Naive thymus-derived CD4-positive, alpha-beta T cell (primary cell): ENCODE measurements at regions of chr5 and their contacts with region 1.

Region 1: GRCh38 chr5:150458819-150459557 is 9.4 kb upstream of the RPS14 start:
- DNase-seq: peak; percentile 72 to 92 (median 85)
- ATAC-seq: peak; percentile 99
- H3K4me3 ChIP-seq: no peak overlapping the region
- H3K4me3 Mint-ChIP-seq: peak overlapping the region in 9 of 10 donors; percentile 4 to 70 (median 60)
- H3K27ac ChIP-seq: peak overlapping the region; percentile 23
- H3K27ac Mint-ChIP-seq: peak overlapping the region; percentile 40 to 91 (median 77)
- H3K4me1 ChIP-seq: peaks cover 0 to 30% of the 10 kb centered on the region in 2 donors
- H3K4me1 Mint-ChIP-seq: peaks cover 17 to 50% (median 42%) of the 10 kb centered on the region in 7 donors
- H3K27me3 ChIP-seq: no peaks in the 10 kb centered on the region
- H3K27me3 Mint-ChIP-seq: no peaks in the 10 kb centered on the region

Region 2: DNA sequence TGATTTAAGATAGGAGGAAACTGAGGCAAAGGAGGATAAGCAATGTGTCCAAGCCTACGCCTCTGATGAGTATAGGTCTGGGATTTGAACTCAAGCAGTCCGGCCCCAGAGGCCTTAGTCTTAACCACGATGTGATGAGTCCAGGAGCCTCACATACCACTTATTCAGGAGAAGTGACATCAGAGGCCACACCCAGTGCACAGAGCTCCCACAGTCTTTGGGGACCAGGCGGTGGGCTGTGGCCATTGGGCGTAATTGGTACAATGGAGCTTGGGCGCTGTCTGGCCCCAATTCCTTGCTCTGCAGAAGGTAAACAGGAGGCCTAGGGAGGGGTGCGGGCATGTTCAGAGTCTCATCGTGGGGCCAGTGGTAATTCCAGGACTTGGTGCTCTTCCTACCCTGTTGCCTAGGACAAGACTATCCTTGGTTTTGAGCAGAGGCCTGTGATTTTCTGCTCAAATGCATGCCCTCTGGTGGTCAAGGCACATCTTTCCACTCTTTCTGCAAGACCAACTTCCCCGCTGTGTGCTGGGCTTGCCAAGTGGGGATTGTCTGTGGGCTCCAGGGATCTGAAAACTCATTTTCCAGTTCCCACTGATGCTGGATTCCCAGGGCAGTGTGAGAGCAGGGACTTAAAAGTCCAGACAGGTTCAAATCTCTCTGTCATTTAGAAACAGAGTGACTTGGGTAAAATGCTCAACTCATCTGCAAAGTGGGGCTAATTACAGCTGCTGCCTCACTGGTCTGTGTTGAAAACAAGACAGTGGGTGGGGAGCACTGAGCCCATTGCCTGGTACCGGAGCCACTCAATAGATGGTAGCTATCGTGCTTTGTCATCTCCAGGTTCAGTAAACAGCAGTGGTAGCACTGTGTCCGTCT is 64.7 kb after region 1 on chr5:
- CTCF ChIA-PET with region 1: interaction called, 9 read pairs
- POLR2A ChIA-PET with region 1: no interaction called
- intact Hi-C with region 1: loop called (anchors 1 kb)
- DNase-seq: peak in 6 of 9 donors; percentile 10 to 39 (median 30)
- ATAC-seq: peak; percentile 57
- H3K4me3 ChIP-seq: no peak overlapping the region
- H3K4me3 Mint-ChIP-seq: no peak overlapping the region
- H3K27ac ChIP-seq: no peak overlapping the region
- H3K27ac Mint-ChIP-seq: no peak overlapping the region
- H3K4me1 ChIP-seq: no peaks in the 10 kb centered on the region
- H3K4me1 Mint-ChIP-seq: peaks cover 0 to 2% (median 0%) of the 10 kb centered on the region in 7 donors
- H3K27me3 ChIP-seq: no peaks in the 10 kb centered on the region
- H3K27me3 Mint-ChIP-seq: no peaks in the 10 kb centered on the region

Region 3: GRCh38 chr5:150560401-150561193 is 101.6 kb after region 1 on chr5:
- CTCF ChIA-PET with region 1: interaction called, 5 read pairs
- POLR2A ChIA-PET with region 1: no interaction called
- intact Hi-C with region 1: loop called (anchors 1 to 2 kb)
- DNase-seq: peak; percentile 48 to 86 (median 78)
- ATAC-seq: peak; percentile 98
- H3K4me3 ChIP-seq: no peak overlapping the region
- H3K4me3 Mint-ChIP-seq: no peak overlapping the region
- H3K27ac ChIP-seq: no peak overlapping the region
- H3K27ac Mint-ChIP-seq: no peak overlapping the region
- H3K4me1 ChIP-seq: no peaks in the 10 kb centered on the region
- H3K4me1 Mint-ChIP-seq: peaks cover 0 to 3% (median 0%) of the 10 kb centered on the region in 7 donors
- H3K27me3 ChIP-seq: no peaks in the 10 kb centered on the region
- H3K27me3 Mint-ChIP-seq: peaks cover 0 to 10% (median 0%) of the 10 kb centered on the region in 5 donors

Region 4: GRCh38 chr5:150710165-150710564 is 251.2 kb after region 1 on chr5:
- CTCF ChIA-PET with region 1: interaction called, 7 read pairs
- POLR2A ChIA-PET with region 1: no interaction called
- intact Hi-C with region 1: loop called in 1 of 2 experiments (anchors 1 kb)
- DNase-seq: peak in 1 of 9 donors; percentile 20
- ATAC-seq: no peak
- H3K4me3 ChIP-seq: no peak overlapping the region
- H3K4me3 Mint-ChIP-seq: no peak overlapping the region
- H3K27ac ChIP-seq: no peak overlapping the region
- H3K27ac Mint-ChIP-seq: no peak overlapping the region
- H3K4me1 ChIP-seq: no peaks in the 10 kb centered on the region
- H3K4me1 Mint-ChIP-seq: no peaks in the 10 kb centered on the region
- H3K27me3 ChIP-seq: no peaks in the 10 kb centered on the region
- H3K27me3 Mint-ChIP-seq: no peaks in the 10 kb centered on the region

Region 5: DNA sequence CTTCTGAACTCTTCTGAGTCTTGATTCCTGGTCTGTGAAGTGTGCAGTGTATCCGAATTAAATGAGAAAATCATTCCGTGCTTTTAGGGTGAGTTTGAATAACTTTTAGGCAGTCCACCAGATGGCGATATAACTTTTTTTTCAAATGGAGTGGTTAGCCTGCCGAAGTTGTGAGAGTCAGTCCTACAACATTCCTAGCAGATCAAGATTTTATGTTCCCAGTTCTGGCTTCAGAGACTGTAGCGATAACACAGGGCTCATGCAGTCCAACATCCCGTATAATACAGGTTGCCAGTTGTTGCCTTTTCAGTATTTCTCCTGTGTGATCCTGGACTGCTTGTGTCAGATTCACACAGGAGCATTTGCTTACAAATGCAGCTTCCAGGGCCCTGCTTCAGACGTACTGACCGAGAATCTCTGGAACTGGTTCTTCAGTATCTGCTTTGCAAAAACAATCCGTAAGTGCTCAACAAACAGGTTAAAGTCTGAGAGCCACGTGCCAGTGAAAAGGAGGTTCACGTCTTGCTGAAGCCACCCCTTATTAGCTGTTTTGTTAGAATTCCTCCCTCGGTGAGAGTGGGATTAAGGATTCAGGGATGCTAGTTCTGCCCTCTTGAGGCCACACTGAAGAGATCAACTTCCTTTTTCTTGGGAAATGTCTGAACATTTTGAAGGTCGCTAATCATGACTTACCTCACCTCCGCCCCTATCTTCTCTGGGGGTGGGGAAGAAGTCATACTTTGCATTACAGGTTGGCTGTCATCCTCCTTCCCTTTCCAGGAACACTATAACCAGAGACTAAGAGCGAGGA is 342.3 kb after region 1 on chr5:
- CTCF ChIA-PET with region 1: interaction called, 3 read pairs
- POLR2A ChIA-PET with region 1: no interaction called
- intact Hi-C with region 1: loop called in 1 of 2 experiments (anchors 2 kb)
- DNase-seq: peak in 7 of 9 donors; percentile 25 to 53 (median 43)
- ATAC-seq: peak; percentile 55
- H3K4me3 ChIP-seq: no peak overlapping the region
- H3K4me3 Mint-ChIP-seq: peak overlapping the region in 1 of 10 donors; percentile 18
- H3K27ac ChIP-seq: no peak overlapping the region
- H3K27ac Mint-ChIP-seq: no peak overlapping the region
- H3K4me1 ChIP-seq: no peaks in the 10 kb centered on the region
- H3K4me1 Mint-ChIP-seq: peaks cover 0 to 18% (median 5%) of the 10 kb centered on the region in 7 donors
- H3K27me3 ChIP-seq: no peaks in the 10 kb centered on the region
- H3K27me3 Mint-ChIP-seq: peaks cover 0 to 16% (median 5%) of the 10 kb centered on the region in 5 donors

Region 6: DNA sequence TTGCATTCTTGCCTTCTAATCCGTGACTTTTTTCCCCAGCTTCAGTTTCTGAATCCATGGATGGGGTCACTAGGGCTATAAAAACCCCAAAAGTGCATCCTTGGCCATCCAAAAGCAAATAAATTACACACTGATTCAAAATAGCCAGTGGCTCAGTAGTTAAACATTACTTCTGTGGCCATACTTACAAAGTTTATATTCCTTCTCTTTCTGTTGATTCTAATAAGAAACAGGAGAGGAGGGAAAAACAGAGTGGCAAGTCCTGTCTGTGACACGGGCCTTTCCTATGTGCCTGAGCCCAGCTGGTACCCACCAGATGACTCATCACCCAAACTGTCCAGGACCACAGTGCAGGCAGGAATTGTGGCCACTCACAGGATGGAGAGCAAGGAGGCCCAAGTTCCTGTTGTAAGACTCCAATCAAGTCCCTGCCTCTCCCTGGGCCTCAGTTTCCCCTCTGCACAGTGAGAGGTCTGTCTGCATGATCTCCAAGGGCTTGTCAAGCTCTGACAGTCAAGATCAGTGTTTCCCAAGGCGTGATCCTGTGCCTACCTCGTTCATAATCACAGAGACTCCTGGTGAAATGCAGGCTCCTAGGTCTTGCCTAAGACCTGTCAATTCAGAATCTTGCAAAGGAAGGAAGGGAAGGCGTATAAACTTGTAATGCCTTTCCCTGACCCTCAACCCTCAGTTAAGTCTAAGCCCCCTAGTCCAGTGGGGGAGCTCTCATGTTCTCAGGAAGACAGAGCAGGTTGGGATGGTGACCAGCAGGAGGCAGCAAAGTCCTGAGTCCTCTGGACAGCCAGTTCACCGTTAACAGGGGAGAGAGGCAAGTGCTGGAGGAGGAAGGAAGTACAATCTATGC is 592.3 kb after region 1 on chr5:
- CTCF ChIA-PET with region 1: no interaction called
- POLR2A ChIA-PET with region 1: no interaction called
- intact Hi-C with region 1: loop called in 1 of 2 experiments (anchors 2 kb)
- DNase-seq: peak; percentile 39 to 68 (median 63)
- ATAC-seq: peak; percentile 85
- H3K4me3 ChIP-seq: no peak overlapping the region
- H3K4me3 Mint-ChIP-seq: no peak overlapping the region
- H3K27ac ChIP-seq: no peak overlapping the region
- H3K27ac Mint-ChIP-seq: peak overlapping the region in 7 of 9 donors; percentile 29 to 63 (median 44)
- H3K4me1 ChIP-seq: no peaks in the 10 kb centered on the region
- H3K4me1 Mint-ChIP-seq: peaks cover 0 to 33% (median 7%) of the 10 kb centered on the region in 7 donors
- H3K27me3 ChIP-seq: no peaks in the 10 kb centered on the region
- H3K27me3 Mint-ChIP-seq: no peaks in the 10 kb centered on the region